ENCODE measurements at regions of chr21 and their contacts with region 1.

Region 1: DNA sequence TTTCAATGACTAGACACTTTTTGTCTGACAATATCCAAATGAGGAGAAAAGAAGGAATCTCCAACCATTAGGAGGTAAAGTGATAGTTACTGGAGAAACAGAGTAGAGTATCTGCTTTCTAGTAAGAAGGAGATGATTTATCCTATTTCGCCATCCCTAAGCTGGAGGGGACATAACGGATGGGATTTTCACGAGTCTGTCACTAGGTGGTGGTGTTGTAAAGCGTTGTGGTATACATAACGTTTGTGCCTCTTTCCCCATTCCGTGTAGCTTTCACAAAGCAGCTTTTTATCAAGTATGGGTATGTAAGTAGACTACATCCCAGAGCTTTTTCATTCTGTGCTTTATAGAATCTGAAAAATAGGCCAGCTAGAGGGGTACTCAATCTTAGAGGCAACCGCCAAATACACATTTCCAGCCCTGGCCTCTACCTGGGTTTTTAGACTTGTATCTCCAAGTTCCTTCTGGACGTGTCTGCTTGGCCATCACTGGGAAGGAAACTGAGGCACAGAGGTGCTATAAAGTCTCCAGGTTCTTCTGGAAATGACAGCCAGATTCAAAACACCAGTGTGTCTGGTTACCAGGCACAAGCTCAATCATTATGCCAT is 33.3 kb upstream of the FAM3B start:
- DNase-seq: peak; percentile 45
- H3K4me3 Mint-ChIP-seq: no peak overlapping the region
- H3K27ac Mint-ChIP-seq: no peak overlapping the region
- H3K4me1 Mint-ChIP-seq: no peaks in the 10 kb centered on the region
- H3K27me3 Mint-ChIP-seq: peaks cover 24% of the 10 kb centered on the region

Region 2: DNA sequence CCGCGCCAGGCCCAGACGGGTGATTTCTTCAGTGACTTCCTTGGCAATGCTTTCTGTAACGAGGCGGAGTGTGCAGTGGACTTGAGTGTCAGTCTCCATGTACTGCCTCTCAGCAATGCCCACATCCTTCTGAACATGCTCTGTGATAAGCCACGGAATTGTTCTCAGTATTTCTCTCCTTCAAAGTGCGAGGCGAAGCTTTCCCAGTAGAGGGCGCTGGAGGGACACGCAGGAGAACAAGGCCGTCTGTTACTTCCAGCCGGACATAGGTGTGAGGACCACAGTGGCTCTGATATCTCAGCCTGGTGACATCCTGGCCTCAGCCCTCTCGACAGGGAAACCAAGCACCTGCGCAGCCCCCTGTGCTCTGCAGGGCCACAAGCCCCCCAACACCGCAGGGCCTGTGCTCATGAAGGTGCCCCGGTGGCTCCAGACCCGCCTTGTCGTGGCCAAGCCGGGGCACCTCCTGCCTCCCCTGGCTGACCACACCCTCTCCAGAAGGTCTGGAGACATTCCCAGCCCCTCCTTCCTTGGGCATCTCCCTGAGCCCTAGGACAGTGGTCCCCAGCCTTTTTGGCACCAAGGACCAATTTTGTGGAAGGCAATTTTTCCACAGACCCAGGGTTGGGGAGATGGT is 161.4 kb before region 1 on chr21:
- CTCF ChIA-PET with region 1: interaction called, 3 read pairs
- POLR2A ChIA-PET with region 1: no interaction called
- intact Hi-C with region 1: loop called (anchors 5 kb)
- DNase-seq: peak; percentile 73
- H3K4me3 Mint-ChIP-seq: no peak overlapping the region
- H3K27ac Mint-ChIP-seq: no peak overlapping the region
- H3K4me1 Mint-ChIP-seq: no peaks in the 10 kb centered on the region
- H3K27me3 Mint-ChIP-seq: peaks cover 8% of the 10 kb centered on the region

Region 3: DNA sequence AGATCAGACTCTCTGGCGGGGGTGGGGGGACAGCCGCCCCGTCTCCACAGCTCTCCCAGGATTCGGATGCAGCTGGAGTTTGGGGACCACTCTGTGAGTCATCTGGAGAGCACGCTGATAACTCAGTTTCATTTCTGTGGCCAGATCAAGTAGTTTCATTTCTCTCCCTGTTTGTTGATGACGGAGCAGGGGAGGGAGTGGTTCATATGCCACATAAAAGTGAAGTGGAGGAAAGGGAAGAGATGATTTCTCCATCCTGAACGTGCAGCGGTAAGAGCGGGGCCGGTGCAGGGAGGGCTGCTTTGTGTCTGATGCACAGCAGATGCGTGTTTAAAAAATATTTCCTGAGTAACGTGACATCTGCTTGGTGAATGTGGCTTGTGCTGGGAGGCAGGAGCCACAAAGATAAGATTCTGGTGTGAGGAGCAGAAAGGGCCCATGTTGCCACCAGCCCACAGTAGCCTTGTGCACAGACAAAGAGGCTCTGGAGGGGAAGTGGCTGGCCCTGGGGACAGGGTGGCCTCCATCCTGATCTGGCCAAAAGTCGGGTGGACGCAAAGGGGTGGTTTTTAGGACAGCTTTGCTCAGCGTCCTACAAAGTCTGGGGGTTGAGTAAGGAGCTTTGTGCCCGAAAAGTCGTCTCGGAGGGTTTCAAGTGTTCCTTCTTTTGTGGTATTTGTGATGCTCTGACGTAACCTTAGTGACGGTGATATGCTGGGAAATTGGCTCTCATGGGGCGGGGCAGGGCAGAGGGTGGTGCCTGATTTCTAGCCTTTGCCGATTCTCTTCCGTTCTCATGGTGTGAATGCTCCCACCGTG is 78.7 kb after region 1 on chr21 and contains the start of gene MX2:
- CTCF ChIA-PET with region 1: interaction called, 17 read pairs
- POLR2A ChIA-PET with region 1: no interaction called
- intact Hi-C with region 1: loop called (anchors 10 kb)
- DNase-seq: peak; percentile 88
- H3K4me3 Mint-ChIP-seq: peak within 1 kb of the TSS; percentile 84
- H3K27ac Mint-ChIP-seq: peak within 1 kb of the TSS; percentile 95
- H3K4me1 Mint-ChIP-seq: peaks cover 48% of the 10 kb centered on the region
- H3K27me3 Mint-ChIP-seq: no peaks in the 10 kb centered on the region
- total RNA-seq, gene MX2: 25.3 to 26.9 TPM

Region 4: DNA sequence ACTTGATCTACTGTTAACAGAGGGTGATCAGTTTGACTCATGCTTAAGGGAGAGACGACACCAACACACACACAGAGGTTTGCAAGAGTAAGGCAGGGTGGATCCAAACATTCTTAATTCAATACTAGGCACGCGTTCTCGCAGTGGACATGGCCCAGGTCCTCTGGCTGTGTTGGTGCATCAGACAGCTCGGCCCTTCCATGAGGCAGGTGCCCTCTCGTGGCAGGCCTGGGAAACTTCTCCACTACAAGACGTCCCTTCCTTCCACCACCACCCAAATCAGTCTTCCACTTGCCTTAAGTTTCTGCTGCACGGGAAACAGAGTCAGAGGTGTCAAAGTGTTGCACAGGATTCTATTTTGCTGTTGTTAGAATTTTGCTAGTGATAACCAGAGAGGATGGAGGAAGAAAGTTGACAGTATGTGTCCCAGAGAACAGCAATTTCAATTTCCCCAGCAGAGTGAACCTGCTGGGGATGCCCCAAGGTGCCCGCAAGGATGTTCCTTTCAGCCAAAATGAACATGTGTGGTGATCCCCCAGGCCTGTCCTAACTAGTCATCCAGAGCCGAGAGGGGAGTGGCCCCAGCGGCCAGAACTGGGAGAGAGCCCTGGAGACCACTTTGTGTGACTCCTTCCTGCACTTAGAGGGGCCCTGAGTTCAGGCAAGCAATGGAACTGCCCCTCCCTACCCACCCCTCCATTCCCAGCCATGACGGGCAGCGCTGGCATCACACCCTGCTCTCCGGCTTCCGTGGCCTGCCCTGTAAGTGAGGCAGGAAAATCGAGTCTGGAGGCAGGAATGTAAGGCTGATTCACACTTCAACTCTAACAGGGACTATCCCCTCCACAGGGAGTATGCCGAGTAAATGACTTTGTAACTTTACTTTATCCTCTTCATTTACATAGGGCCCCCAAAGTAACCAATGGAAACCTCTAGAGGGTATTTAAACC is 177.5 kb after region 1 on chr21:
- CTCF ChIA-PET with region 1: interaction called, 66 read pairs
- POLR2A ChIA-PET with region 1: no interaction called
- intact Hi-C with region 1: loop called (anchors 1 kb)
- DNase-seq: peak; percentile 68
- H3K4me3 Mint-ChIP-seq: no peak overlapping the region
- H3K27ac Mint-ChIP-seq: no peak overlapping the region
- H3K4me1 Mint-ChIP-seq: no peaks in the 10 kb centered on the region
- H3K27me3 Mint-ChIP-seq: no peaks in the 10 kb centered on the region

Region 5: DNA sequence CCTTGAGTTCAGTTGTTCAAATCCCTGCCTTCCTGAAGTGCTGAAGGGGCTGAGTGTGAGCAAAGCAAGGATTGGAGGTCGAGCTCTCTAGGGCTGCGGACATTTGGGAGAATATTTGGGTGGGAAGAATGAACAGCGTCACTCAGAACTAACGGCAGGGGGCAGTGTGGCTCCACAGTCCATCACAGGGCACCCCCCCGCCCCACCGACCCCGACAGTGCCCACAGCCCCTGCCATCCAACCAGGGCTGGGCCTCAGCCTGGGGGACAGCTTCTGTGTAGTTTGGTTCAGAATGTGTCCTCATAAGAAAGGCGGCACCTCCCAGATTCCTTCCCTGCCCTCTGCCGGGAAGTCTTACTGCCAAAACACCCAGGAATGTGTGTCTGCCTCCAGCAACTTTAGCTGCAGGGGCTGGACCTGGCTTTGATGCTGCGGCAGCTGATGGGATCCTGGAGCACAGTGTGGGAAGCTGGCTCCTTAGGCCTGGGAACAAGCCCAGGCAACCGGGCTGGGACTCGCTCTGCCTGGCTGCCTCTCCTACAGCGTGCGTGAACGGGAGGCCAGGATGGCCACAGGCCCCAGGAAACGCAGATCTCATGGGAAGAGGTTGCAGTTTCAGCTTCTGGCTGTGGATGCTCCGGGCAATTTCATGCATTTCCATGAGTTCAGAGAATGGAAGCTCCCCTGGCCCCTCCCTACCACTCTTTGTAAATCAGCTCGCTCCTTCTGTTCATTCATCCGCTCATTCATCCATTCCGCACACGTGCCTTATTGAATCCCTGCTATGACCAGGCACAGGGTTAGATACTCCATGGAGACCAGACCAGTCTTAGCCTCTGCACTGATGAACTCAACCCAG is 329.6 kb after region 1 on chr21:
- CTCF ChIA-PET with region 1: interaction called, 6 read pairs
- POLR2A ChIA-PET with region 1: no interaction called
- intact Hi-C with region 1: loop called (anchors 10 kb)
- DNase-seq: peak; percentile 32
- H3K4me3 Mint-ChIP-seq: no peak overlapping the region
- H3K27ac Mint-ChIP-seq: no peak overlapping the region
- H3K4me1 Mint-ChIP-seq: no peaks in the 10 kb centered on the region
- H3K27me3 Mint-ChIP-seq: peaks cover 32% of the 10 kb centered on the region

Region 6: DNA sequence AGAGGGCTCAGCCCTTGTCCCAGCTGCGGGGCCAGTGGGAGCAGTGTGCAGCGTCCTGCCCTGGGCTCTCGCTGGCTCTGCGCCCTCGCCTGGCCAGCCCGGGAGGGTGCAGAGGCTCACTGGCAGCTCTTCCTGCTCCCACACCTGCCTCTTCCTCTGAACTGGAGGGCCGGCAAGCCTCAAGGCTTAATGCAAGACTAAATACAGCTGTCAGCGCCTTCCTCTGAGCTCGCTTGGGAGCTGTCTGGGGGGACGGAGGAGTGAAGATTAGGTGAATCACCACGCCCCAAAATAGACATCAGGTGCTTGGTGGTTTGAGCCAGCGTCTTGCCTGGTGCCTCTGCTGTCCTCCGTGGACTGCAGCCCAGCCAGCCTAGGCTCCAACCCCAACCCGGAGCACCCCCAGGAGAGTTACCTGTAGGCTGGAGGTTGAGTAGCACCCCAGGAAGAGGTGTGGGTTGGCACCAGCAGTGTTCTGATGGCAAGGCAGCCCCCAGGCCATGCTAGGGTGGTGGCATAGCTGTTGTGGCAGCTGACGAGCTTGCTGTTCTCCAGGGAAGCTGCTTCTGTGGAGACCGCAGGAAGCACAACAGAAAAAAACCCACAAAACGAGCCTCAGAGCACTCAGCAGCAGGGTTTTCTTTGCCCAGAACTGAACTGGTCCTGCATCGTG is 824.7 kb after region 1 on chr21:
- CTCF ChIA-PET with region 1: interaction called, 11 read pairs
- POLR2A ChIA-PET with region 1: no interaction called
- intact Hi-C with region 1: no loop called
- DNase-seq: peak; percentile 76
- H3K4me3 Mint-ChIP-seq: no peak overlapping the region
- H3K27ac Mint-ChIP-seq: no peak overlapping the region
- H3K4me1 Mint-ChIP-seq: peaks cover 10% of the 10 kb centered on the region
- H3K27me3 Mint-ChIP-seq: peaks cover 1% of the 10 kb centered on the region

Measured in activated CD4-positive, alpha-beta memory T cell treated with anti-CD3 and anti-CD28 coated beads for 36 hours (primary cell).